Heart left ventricle (tissue), 16 donors: ENCODE measurements at regions of chr1 and their contacts with region 1.

Region 1: GRCh38 chr1:241998412-241998921 is 431 bp downstream of the MAP1LC3C start:
- DNase-seq: peak; percentile 67 to 83 (median 74)
- ATAC-seq: peak; percentile 43 to 93 (median 84)
- H3K4me3 ChIP-seq: peak overlapping the region in 10 of 12 donors; percentile 7 to 53 (median 35)
- H3K27ac ChIP-seq: peak overlapping the region in 6 of 12 donors; percentile 17 to 54 (median 46)
- H3K4me1 ChIP-seq: peaks cover 0 to 10% (median 0%) of the 10 kb centered on the region in 12 donors
- H3K27me3 ChIP-seq: no peaks in the 10 kb centered on the region
- CTCF ChIP-seq: peak; percentile 35 to 80 (median 61)
- POLR2A ChIP-seq: no peak

Region 2: GRCh38 chr1:241600496-241600901 is 398.0 kb before region 1 on chr1:
- intact Hi-C with region 1: loop called in 1 of 10 experiments (anchors 10 kb)
- DNase-seq: no peak
- ATAC-seq: no peak
- H3K4me3 ChIP-seq: no peak overlapping the region
- H3K27ac ChIP-seq: no peak overlapping the region
- H3K4me1 ChIP-seq: peaks cover 0 to 24% (median 0%) of the 10 kb centered on the region in 12 donors
- H3K27me3 ChIP-seq: no peaks in the 10 kb centered on the region
- CTCF ChIP-seq: no peak
- POLR2A ChIP-seq: no peak